Activated B cell treated with CpG ODN at 0.5 μM for 24 hours (primary cell): ENCODE measurements at regions of chr3 and their contacts with region 1.

Region 1: DNA sequence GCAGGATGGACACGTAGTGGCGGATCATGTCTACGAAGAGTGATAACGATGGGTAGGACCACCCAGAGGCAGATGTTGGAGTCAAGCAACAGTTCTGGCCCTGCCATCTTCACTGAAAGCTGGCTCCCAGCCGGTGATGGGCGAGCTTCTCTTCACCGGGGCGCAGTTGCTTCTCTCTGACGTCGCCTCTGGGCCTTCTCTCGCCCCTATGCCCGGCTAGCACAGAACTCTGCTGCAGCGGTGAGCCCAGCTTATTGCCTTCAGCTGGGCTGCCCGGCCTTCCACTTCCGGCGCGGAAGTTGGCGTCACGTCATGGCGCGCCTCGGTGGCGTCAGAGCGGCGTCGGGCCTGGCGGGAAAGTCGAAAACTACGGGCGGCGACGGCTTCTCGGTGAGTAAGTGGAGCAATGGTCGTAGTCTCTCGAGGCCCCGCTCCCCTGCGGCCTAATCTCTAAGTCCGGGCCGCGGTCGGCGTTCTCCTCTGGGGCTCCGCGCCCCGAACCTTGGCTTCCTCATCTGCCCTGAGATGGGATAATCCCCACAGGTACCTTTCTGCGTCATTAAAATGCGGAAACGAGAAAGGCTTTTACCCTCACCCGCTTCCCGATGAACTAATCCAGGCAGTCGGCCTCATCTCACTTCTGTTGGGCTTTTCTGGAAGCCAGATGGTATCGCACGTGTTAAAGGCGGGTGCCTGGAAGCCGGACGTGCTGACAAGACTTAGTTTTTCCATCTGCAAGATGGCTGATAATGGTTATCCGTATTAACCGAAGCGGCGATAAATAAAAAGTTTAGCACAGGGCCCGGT is at the start of gene FANCD2:
- DNase-seq: peak; percentile 97
- ATAC-seq: peak; percentile 86
- H3K4me3 Mint-ChIP-seq: peak within 1 kb of the TSS; percentile 96
- H3K27ac Mint-ChIP-seq: peak within 1 kb of the TSS; percentile 96
- H3K4me1 Mint-ChIP-seq: peaks cover 37% of the 10 kb centered on the region
- H3K27me3 Mint-ChIP-seq: no peaks in the 10 kb centered on the region
- CTCF ChIP-seq: no peak
- total RNA-seq, gene FANCD2: 26.8 and 31.4 TPM in 2 replicates

Region 2: GRCh38 chr3:9396700-9397521 is 629.4 kb before region 1 on chr3:
- CTCF ChIA-PET with region 1: no interaction called
- POLR2A ChIA-PET with region 1: no interaction called
- intact Hi-C with region 1: loop called (anchors 2 kb)
- DNase-seq: peak; percentile 99
- ATAC-seq: peak; percentile 71
- H3K4me3 Mint-ChIP-seq: peak overlapping the region; percentile 98
- H3K27ac Mint-ChIP-seq: peak overlapping the region; percentile 100
- H3K4me1 Mint-ChIP-seq: peaks cover 61% of the 10 kb centered on the region
- H3K27me3 Mint-ChIP-seq: no peaks in the 10 kb centered on the region
- CTCF ChIP-seq: no peak

Region 3: DNA sequence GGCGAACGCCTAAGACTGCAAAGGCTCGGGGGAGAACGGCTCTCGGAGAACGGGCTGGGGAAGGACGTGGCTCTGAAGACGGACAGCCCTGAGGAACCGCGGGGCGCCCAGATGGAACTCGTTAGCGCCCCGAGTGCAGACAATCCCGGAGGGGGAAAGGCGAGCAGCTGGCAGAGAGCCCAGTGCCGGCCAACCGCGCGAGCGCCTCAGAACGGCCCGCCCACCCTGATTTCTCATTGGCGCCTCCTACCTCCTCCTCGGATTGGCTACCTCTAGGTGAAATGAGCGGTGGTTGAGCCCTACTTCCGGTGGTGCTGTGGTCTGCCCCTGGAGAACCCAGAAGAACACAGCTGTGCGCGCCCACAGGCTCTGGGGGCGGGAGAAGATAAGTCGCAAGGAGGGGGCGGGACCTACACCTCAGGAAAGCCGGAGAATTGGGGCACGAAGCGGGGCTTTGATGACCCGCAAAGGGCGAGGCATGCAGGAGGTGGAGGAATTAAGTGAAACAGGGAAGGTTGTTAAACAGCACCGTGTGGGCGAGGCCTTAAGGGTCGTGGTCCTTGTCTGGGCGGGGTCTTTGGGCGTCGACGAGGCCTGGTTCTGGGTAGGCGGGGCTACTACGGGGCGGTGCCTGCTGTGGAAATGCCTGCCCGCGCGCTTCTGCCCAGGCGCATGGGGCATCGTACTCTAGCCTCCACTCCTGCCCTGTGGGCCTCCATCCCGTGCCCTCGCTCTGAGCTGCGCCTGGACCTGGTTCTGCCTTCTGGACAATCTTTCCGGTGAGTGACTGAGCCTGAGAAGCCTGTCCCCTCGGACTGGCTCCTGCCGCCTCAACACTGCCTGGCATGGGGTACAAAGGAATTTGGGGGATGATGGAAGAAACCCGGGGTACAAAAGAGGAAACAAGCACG is 276.4 kb before region 1 on chr3 and contains the start of gene OGG1:
- CTCF ChIA-PET with region 1: no interaction called
- POLR2A ChIA-PET with region 1: interaction called, 4 read pairs
- intact Hi-C with region 1: loop called (anchors 1 kb)
- DNase-seq: peak; percentile 89
- ATAC-seq: peak; percentile 90
- H3K4me3 Mint-ChIP-seq: peak within 1 kb of the TSS; percentile 94
- H3K27ac Mint-ChIP-seq: peak within 1 kb of the TSS; percentile 95
- H3K4me1 Mint-ChIP-seq: peaks cover 48% of the 10 kb centered on the region
- H3K27me3 Mint-ChIP-seq: no peaks in the 10 kb centered on the region
- CTCF ChIP-seq: no peak
- total RNA-seq, gene OGG1: 43.5 and 60.7 TPM in 2 replicates

Region 4: DNA sequence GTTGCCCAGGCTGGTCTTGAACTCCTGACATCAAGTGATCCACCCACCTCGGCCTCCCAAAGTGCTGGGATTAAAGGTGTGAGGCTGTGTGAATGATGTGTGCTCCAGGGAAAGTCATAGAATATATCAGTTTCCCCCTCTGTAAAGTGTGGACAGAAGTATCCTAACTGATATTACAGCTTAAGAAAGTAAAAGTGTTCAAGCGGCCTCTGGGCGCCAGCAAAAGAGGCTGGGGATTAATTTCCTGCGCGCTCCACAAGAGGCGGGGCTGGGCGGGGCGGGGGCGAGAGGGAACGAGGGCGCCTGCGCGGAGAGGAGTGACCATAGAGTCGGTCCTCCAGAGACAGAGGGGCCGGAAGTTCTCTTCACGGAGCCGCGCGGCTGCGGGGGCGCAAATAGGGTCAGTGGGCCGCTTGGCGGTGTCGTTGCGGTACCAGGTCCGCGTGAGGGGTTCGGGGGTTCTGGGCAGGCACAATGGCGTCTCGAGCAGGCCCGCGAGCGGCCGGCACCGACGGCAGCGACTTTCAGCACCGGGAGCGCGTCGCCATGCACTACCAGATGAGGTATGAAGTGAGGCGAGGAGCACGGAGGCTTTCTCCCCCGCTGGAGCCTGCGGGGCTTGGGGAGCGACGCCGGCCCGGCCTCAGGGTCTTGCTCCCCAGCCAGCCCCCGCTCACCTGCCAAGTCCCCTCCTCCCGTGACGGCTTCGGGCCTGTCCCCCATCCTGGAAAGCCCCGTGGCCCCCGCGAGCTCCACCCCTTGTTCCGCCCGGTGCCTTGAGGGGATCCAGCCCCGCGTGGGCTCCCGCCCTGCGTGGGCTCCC is 135.8 kb before region 1 on chr3 and contains the start of gene JAGN1:
- CTCF ChIA-PET with region 1: no interaction called
- POLR2A ChIA-PET with region 1: interaction called, 9 read pairs
- intact Hi-C with region 1: loop called (anchors 2 kb)
- DNase-seq: peak; percentile 85
- ATAC-seq: peak; percentile 86
- H3K4me3 Mint-ChIP-seq: peak within 1 kb of the TSS; percentile 94
- H3K27ac Mint-ChIP-seq: peak within 1 kb of the TSS; percentile 97
- H3K4me1 Mint-ChIP-seq: peaks cover 44% of the 10 kb centered on the region
- H3K27me3 Mint-ChIP-seq: no peaks in the 10 kb centered on the region
- CTCF ChIP-seq: no peak
- total RNA-seq, gene JAGN1: 30.9 and 32.1 TPM in 2 replicates

Region 5: DNA sequence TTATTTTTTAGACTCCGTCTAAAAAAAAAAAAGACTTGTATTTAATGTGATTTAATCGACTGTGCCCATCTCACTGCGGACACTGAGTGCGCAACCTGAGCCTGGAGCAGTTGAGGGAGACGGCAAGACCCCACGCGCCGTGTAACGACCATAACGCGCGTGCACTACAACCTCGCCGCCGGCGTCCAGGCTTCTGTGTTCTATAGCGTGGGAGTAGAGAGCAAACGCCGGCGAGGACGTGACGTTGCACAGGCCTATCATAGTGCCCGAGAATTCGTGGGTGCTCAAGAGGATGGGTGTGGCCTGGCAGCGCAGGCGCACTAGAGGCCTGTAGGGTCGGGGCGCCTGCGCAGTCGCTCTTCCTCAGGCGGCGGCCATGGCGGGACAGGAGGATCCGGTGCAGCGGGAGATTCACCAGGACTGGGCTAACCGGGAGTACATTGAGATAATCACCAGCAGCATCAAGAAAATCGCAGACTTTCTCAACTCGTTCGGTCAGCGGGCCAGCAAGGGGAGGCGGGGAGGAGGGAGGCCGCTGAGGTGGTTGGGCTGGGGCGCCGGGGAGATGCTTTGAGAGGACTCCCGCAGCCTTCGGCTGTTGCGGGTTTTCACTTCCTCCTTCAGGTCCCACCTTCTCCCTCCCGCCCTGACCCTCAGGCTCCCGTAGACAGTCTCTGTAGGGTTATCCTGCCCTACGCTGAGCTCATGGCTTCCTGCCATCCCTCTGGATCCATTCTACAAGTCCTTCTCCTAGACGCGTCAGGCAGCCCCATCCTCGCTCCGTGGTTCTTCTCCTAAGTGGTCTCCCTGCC is 89.2 kb after region 1 on chr3 and contains the start of gene BRK1:
- CTCF ChIA-PET with region 1: no interaction called
- POLR2A ChIA-PET with region 1: interaction called, 5 read pairs
- intact Hi-C with region 1: loop called (anchors 2 kb)
- DNase-seq: peak; percentile 85
- ATAC-seq: peak; percentile 96
- H3K4me3 Mint-ChIP-seq: peak within 1 kb of the TSS; percentile 100
- H3K27ac Mint-ChIP-seq: peak within 1 kb of the TSS; percentile 99
- H3K4me1 Mint-ChIP-seq: peaks cover 40% of the 10 kb centered on the region
- H3K27me3 Mint-ChIP-seq: no peaks in the 10 kb centered on the region
- CTCF ChIP-seq: no peak
- total RNA-seq, gene BRK1: 123 and 141 TPM in 2 replicates

Region 6: GRCh38 chr3:10149226-10149625 is 122.9 kb after region 1 on chr3:
- CTCF ChIA-PET with region 1: no interaction called
- POLR2A ChIA-PET with region 1: no interaction called
- intact Hi-C with region 1: no loop called
- DNase-seq: no peak
- ATAC-seq: peak; percentile 79
- H3K4me3 Mint-ChIP-seq: peak overlapping the region; percentile 24
- H3K27ac Mint-ChIP-seq: peak overlapping the region; percentile 81
- H3K4me1 Mint-ChIP-seq: peaks cover 39% of the 10 kb centered on the region
- H3K27me3 Mint-ChIP-seq: no peaks in the 10 kb centered on the region
- CTCF ChIP-seq: no peak

Region 7: DNA sequence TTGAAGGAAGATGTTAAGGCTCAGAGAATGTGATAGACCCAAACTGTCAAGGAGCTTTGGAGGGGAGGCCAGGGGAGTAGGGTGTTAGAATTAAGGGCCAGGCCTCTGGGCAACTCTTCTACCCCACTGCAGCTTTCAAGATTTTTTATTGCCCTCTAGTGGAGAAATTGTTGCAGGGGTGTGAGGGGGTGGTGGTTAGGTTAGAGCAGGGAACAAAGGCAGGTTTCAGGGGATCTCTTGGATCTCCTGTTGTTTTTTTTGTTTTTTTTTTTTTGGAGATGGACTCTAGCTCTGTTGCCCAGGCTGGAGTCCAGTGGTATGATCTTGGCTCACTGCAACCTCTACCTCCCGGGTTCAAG is 296.0 kb after region 1 on chr3:
- CTCF ChIA-PET with region 1: no interaction called
- POLR2A ChIA-PET with region 1: interaction called, 5 read pairs
- intact Hi-C with region 1: loop called (anchors 2 kb)
- DNase-seq: no peak
- ATAC-seq: no peak
- H3K4me3 Mint-ChIP-seq: no peak overlapping the region
- H3K27ac Mint-ChIP-seq: no peak overlapping the region
- H3K4me1 Mint-ChIP-seq: peaks cover 31% of the 10 kb centered on the region
- H3K27me3 Mint-ChIP-seq: peaks cover 9% of the 10 kb centered on the region
- CTCF ChIP-seq: no peak